HepG2 (cell line): ENCODE measurements at regions of chr19 and their contacts with region 1.

Region 1: GRCh38 chr19:49570138-49570856 is 10.1 kb downstream of the NOSIP start:
- DNase-seq: peak; percentile 88
- ATAC-seq: peak; percentile 78
- H3K4me3 ChIP-seq: peak overlapping the region; percentile 23 to 65 (median 55)
- H3K27ac ChIP-seq: peak overlapping the region; percentile 76
- H3K4me1 ChIP-seq: peaks cover 16% of the 10 kb centered on the region
- H3K27me3 ChIP-seq: no peaks in the 10 kb centered on the region
- CTCF ChIP-seq: peak; percentile 89
- EP300 ChIP-seq: no peak
- POLR2A ChIP-seq: no peak
- RAD21 ChIP-seq: peak; percentile 90

Region 2: DNA sequence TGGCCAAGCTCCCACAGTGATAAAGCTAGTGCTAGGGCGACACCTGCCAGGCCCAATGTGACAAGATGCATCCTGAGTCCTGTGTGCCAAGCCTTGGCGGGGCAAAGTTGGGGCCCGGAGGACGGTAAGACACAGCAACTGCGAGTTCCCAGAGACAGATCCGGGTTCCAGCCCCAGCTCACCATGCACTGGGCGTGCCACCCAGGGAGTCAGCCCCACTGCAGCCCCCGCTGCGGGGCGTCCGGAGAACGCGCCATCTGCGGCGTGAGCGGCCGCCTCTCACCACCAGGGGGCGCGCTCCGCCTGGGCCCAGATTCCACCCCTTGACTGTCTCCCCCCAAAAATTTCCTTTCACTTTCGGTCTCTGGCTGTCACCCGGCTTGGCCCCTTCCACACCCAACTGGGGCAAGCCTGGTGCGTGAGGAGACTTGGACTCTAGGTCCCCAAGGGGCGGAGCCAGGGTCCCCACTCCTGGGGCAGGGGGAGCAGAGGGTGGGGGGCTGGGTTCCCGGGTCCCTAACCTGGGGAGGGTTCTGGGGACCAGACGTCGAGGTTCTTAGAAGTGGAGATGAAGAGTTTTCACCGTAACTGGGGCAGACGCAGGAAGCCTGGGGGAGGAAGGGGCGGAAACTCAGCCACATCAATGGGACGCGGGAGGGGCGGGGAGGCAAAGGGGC is 96.3 kb before region 1 on chr19 and contains the start of gene FLT3LG:
- CTCF ChIA-PET with region 1: interaction called, 12 read pairs
- POLR2A ChIA-PET with region 1: no interaction called
- in situ Hi-C with region 1: no loop called
- intact Hi-C with region 1: no loop called
- DNase-seq: peak; percentile 46
- ATAC-seq: peak; percentile 70
- H3K4me3 ChIP-seq: peak within 1 kb of the TSS; percentile 78 to 99 (median 78)
- H3K27ac ChIP-seq: no peak within 1 kb of the TSS
- H3K4me1 ChIP-seq: peaks cover 34% of the 10 kb centered on the region
- H3K27me3 ChIP-seq: no peaks in the 10 kb centered on the region; a peak in 1 of 5 replicates
- CTCF ChIP-seq: peak; percentile 95
- EP300 ChIP-seq: 0 out of 4 replicates have a peak, but pooled peaks of 1 of the 2 experiments have one; percentile 5
- POLR2A ChIP-seq: 0 out of 4 replicates have a peak, but pooled peaks of 1 of the 2 experiments have one; percentile 30
- RAD21 ChIP-seq: peak; percentile 70
- total RNA-seq, gene FLT3LG: 0.58 and 1.5 TPM in 2 replicates

Region 3: GRCh38 chr19:49497047-49497788 is 73.1 kb before region 1 on chr19:
- CTCF ChIA-PET with region 1: no interaction called
- POLR2A ChIA-PET with region 1: interaction called, 20 read pairs
- in situ Hi-C with region 1: loop called (anchors 5 kb)
- intact Hi-C with region 1: no loop called
- DNase-seq: no peak
- ATAC-seq: no peak
- H3K4me3 ChIP-seq: peak overlapping the region; percentile 77 to 85 (median 78)
- H3K27ac ChIP-seq: peak overlapping the region; percentile 81
- H3K4me1 ChIP-seq: peaks cover 39% of the 10 kb centered on the region
- H3K27me3 ChIP-seq: peaks cover 0 to 4% of the 10 kb centered on the region in 2 experiments; a peak in 1 of 5 replicates
- CTCF ChIP-seq: no peak
- EP300 ChIP-seq: no peak
- POLR2A ChIP-seq: peak; percentile 66 to 71; a peak in 3 of 4 replicates
- RAD21 ChIP-seq: no peak

Region 4: DNA sequence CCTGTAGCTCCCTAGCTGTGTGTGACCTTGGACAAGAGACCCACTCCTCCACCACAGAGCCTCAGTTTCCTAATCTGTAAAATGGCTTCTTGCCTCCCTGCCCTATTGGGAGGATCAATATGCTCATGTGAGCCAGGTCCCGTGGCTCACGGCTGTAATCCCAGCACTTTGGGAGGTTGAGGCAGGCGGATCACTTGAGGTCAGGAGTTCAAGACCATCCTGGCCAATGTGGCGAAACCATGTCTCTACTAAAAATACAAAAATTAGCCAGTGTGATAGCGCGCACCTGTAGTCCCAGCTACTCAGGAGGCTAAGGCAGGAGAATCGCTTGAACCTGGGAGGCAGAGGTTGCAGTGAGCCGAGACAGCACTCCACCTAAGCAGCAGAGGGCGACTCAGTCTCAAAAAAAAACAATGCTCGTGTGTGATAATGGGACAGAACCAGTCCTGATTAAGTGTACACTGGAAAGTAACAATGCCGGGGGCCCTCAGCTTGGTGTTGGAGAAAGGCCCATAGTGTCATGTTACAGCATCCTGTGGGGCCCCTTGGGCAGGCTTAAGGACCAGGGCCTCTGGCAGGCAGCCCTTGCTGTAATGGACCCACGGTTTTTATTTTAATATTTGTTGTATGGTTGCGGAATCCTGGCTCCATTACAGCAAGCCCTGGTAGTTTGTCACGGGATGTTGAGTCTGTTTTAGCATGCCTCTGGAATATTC is 67.3 kb before region 1 on chr19:
- CTCF ChIA-PET with region 1: interaction called, 47 read pairs
- POLR2A ChIA-PET with region 1: interaction called, 4 read pairs
- in situ Hi-C with region 1: loop called (anchors 5 kb)
- intact Hi-C with region 1: loop called (anchors 1 kb)
- DNase-seq: peak; percentile 74
- ATAC-seq: peak; percentile 62
- H3K4me3 ChIP-seq: peak overlapping the region in 1 of 3 experiments; percentile 46; a peak in 1 of 6 replicates
- H3K27ac ChIP-seq: no peak overlapping the region
- H3K4me1 ChIP-seq: peaks cover 57% of the 10 kb centered on the region
- H3K27me3 ChIP-seq: no peaks in the 10 kb centered on the region
- CTCF ChIP-seq: peak; percentile 81
- EP300 ChIP-seq: no peak
- POLR2A ChIP-seq: no peak
- RAD21 ChIP-seq: peak; percentile 68

Region 5: DNA sequence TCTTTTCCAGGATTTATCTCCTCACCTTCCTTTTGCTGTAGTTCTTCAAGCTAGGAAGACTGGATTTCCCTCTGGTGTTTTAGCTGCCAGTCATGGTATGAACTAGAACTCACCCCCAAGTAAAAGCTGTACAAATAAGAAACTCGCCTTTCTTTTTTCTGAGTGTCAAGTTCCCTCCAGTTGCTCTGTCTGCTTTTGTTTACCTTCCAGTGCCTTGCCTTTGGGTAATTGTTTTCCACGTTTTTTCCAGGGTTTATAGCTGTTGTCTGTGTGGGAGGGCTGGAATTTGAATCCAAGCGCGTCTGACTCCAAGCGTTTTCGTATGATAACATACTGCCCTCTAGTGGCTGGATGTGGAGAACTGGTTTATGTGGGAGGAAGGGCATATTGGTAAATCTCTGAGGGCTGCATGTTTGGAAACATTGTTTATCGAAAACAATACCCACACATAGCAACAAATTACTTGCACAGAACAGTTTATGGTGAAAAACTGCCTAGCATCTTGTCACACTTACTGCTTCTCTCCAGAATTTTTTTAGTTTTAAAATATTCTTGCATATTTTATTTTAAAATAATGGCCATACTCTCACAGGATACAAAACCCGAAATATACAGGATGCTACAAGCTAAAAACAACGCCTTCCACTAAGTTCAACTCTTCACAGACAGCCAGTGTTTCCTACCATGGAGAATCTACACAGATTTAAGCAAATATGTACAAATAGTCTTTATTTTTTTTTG is 23.3 kb before region 1 on chr19:
- CTCF ChIA-PET with region 1: interaction called, 22 read pairs
- POLR2A ChIA-PET with region 1: interaction called, 5 read pairs
- in situ Hi-C with region 1: no loop called
- intact Hi-C with region 1: loop called (anchors 1 kb)
- DNase-seq: peak; percentile 85
- ATAC-seq: peak; percentile 77
- H3K4me3 ChIP-seq: no peak overlapping the region
- H3K27ac ChIP-seq: peak overlapping the region; percentile 44
- H3K4me1 ChIP-seq: peaks cover 5% of the 10 kb centered on the region
- H3K27me3 ChIP-seq: no peaks in the 10 kb centered on the region
- CTCF ChIP-seq: peak; percentile 90
- EP300 ChIP-seq: no peak
- POLR2A ChIP-seq: no peak
- RAD21 ChIP-seq: peak; percentile 79

Region 6: GRCh38 chr19:49580264-49581006 is 10.1 kb after region 1 on chr19 and contains the start of gene NOSIP:
- CTCF ChIA-PET with region 1: interaction called, 8 read pairs
- POLR2A ChIA-PET with region 1: interaction called, 19 read pairs
- in situ Hi-C with region 1: no loop called
- intact Hi-C with region 1: no loop called
- DNase-seq: peak; percentile 93
- ATAC-seq: peak; percentile 94
- H3K4me3 ChIP-seq: peak within 1 kb of the TSS; percentile 75 to 94 (median 88)
- H3K27ac ChIP-seq: peak within 1 kb of the TSS; percentile 61
- H3K4me1 ChIP-seq: peaks cover 35% of the 10 kb centered on the region
- H3K27me3 ChIP-seq: peaks cover 0 to 5% of the 10 kb centered on the region in 2 experiments; a peak in 1 of 5 replicates
- CTCF ChIP-seq: no peak; the same call in 1 of the 2 replicates
- EP300 ChIP-seq: peak; percentile 27 to 57; a peak in 1 of 4 replicates
- POLR2A ChIP-seq: peak; percentile 99 to 100
- RAD21 ChIP-seq: peak; percentile 28; the same call in 1 of the 2 replicates
- total RNA-seq, gene NOSIP: 78.0 and 81.4 TPM in 2 replicates

Region 7: DNA sequence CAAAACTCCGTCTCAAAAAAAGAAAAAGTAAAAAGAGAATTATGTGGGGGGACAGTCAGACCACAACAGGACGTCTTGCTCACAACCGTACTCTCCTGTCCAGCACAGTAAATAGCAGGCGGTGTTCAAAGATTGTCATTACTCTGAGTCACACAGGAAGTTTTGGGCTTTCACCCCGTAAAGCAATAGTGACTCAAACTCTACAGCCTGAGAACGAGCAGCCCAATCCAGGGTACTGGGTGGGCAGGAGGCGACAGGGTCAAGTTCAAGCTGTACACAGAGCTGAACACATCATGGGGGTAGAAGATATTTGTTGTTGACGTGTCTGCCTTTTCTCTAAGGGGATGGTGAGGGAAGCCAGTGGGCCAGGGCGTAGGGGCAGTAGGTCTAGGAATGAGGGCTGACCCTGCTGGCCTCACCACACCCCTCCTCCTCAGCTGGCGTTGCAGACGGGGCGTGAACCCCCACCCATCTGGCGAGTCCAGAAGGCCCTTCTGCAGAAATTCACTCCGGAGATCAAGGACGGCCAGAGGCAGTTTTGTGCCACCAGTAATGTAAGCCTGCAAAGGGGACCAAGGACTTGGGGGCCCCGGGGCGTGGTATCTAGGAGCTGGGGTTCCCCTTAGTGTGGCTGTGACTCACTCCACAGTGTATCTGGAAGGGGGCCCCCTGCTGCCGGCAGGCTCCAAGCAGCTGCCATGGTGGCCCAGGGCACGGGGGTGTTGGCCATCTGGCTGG is 44.0 kb after region 1 on chr19:
- CTCF ChIA-PET with region 1: no interaction called
- POLR2A ChIA-PET with region 1: no interaction called
- in situ Hi-C with region 1: no loop called
- intact Hi-C with region 1: no loop called
- DNase-seq: peak; percentile 51
- ATAC-seq: peak; percentile 69
- H3K4me3 ChIP-seq: no peak overlapping the region
- H3K27ac ChIP-seq: no peak overlapping the region
- H3K4me1 ChIP-seq: peaks cover 17% of the 10 kb centered on the region
- H3K27me3 ChIP-seq: no peaks in the 10 kb centered on the region
- CTCF ChIP-seq: no peak
- EP300 ChIP-seq: no peak
- POLR2A ChIP-seq: no peak
- RAD21 ChIP-seq: no peak

Region 8: GRCh38 chr19:49727217-49728030 is 157.1 kb after region 1 on chr19:
- CTCF ChIA-PET with region 1: no interaction called
- POLR2A ChIA-PET with region 1: no interaction called
- in situ Hi-C with region 1: no loop called
- intact Hi-C with region 1: no loop called
- DNase-seq: no peak
- ATAC-seq: no peak
- H3K4me3 ChIP-seq: no peak overlapping the region
- H3K27ac ChIP-seq: no peak overlapping the region
- H3K4me1 ChIP-seq: no peaks in the 10 kb centered on the region
- H3K27me3 ChIP-seq: 0 out of 5 replicates have a peak, but pooled peaks cover 0 to 1% of the 10 kb centered on the region in 2 experiments
- CTCF ChIP-seq: no peak
- EP300 ChIP-seq: no peak
- POLR2A ChIP-seq: no peak
- RAD21 ChIP-seq: no peak